ENCODE measurements at regions of chr11 and their contacts with region 1.

Region 1: GRCh38 chr11:78202733-78203167 is 14.0 kb downstream of the USP35 start:
- DNase-seq: peak; percentile 95
- ATAC-seq: peak; percentile 97
- H3K4me3 ChIP-seq: peak overlapping the region in 1 of 3 experiments; percentile 21; a peak in 2 of 6 replicates
- H3K27ac ChIP-seq: peak overlapping the region; percentile 61
- H3K4me1 ChIP-seq: peaks cover 42% of the 10 kb centered on the region
- H3K27me3 ChIP-seq: no peaks in the 10 kb centered on the region
- CTCF ChIP-seq: no peak
- EP300 ChIP-seq: peak; percentile 37 to 68; a peak in 3 of 4 replicates
- POLR2A ChIP-seq: 0 out of 4 replicates have a peak, but pooled peaks of 1 of the 2 experiments have one; percentile 18
- RAD21 ChIP-seq: peak; percentile 34; the same call in 1 of the 2 replicates

Region 2: GRCh38 chr11:78188286-78189173 is 14.2 kb before region 1 on chr11 and contains the starts of genes KCTD21 and USP35:
- CTCF ChIA-PET with region 1: no interaction called
- POLR2A ChIA-PET with region 1: interaction called, 17 read pairs
- in situ Hi-C with region 1: no loop called
- intact Hi-C with region 1: loop called (anchors 2 kb)
- DNase-seq: peak; percentile 92
- ATAC-seq: peak; percentile 93
- H3K4me3 ChIP-seq: peak within 1 kb of the TSS; percentile 78 to 96 (median 86)
- H3K27ac ChIP-seq: peak within 1 kb of the TSS; percentile 47
- H3K4me1 ChIP-seq: peaks cover 78% of the 10 kb centered on the region
- H3K27me3 ChIP-seq: no peaks in the 10 kb centered on the region; a peak in 1 of 5 replicates
- CTCF ChIP-seq: peak; percentile 9; the same call in 1 of the 2 replicates
- EP300 ChIP-seq: peak in 1 of 2 experiments; percentile 19; a peak in 2 of 4 replicates
- POLR2A ChIP-seq: peak in 1 of 2 experiments; percentile 85; a peak in 2 of 4 replicates
- RAD21 ChIP-seq: 0 out of 2 replicates have a peak, but pooled peaks have one; percentile 13
- total RNA-seq, gene KCTD21: 3.1 and 3.9 TPM in 2 replicates
- total RNA-seq, gene USP35: 1.8 and 4.6 TPM in 2 replicates

Region 3: GRCh38 chr11:78325274-78325781 is 122.6 kb after region 1 on chr11:
- CTCF ChIA-PET with region 1: no interaction called
- POLR2A ChIA-PET with region 1: no interaction called
- in situ Hi-C with region 1: no loop called
- intact Hi-C with region 1: no loop called
- DNase-seq: no peak
- ATAC-seq: no peak
- H3K4me3 ChIP-seq: no peak overlapping the region
- H3K27ac ChIP-seq: no peak overlapping the region
- H3K4me1 ChIP-seq: peaks cover 13% of the 10 kb centered on the region
- H3K27me3 ChIP-seq: no peaks in the 10 kb centered on the region
- CTCF ChIP-seq: no peak
- EP300 ChIP-seq: no peak
- POLR2A ChIP-seq: no peak
- RAD21 ChIP-seq: no peak

Region 4: DNA sequence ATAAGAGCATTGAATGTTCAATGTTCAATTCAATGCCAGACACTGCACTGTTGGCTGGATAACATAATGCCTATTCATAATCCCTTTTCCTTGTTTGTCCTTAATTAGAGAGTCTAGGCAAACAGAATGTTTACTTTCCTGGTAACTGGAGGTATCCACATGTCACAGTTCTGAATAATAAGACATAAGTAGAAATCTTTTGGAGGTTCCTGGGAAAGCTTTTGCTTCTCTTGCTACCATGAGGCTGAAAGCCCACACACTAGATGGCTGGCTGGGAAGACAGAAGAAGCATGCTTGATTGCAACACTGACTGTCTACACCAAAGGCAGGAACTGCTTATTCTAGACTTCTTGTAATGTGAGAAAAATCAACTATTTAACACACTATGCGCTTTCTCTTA is 135.4 kb after region 1 on chr11:
- CTCF ChIA-PET with region 1: no interaction called
- POLR2A ChIA-PET with region 1: no interaction called
- in situ Hi-C with region 1: no loop called
- intact Hi-C with region 1: no loop called
- DNase-seq: no peak
- ATAC-seq: peak; percentile 35; the same call in 1 of the 3 replicates
- H3K4me3 ChIP-seq: no peak overlapping the region
- H3K27ac ChIP-seq: no peak overlapping the region
- H3K4me1 ChIP-seq: peaks cover 16% of the 10 kb centered on the region
- H3K27me3 ChIP-seq: no peaks in the 10 kb centered on the region; a peak in 1 of 5 replicates
- CTCF ChIP-seq: no peak
- EP300 ChIP-seq: no peak
- POLR2A ChIP-seq: no peak
- RAD21 ChIP-seq: no peak

Region 5: GRCh38 chr11:78379039-78379670 is 176.4 kb after region 1 on chr11:
- CTCF ChIA-PET with region 1: no interaction called
- POLR2A ChIA-PET with region 1: no interaction called
- in situ Hi-C with region 1: no loop called
- intact Hi-C with region 1: no loop called
- DNase-seq: no peak
- ATAC-seq: no peak
- H3K4me3 ChIP-seq: no peak overlapping the region
- H3K27ac ChIP-seq: no peak overlapping the region
- H3K4me1 ChIP-seq: peaks cover 14% of the 10 kb centered on the region
- H3K27me3 ChIP-seq: no peaks in the 10 kb centered on the region
- CTCF ChIP-seq: no peak
- EP300 ChIP-seq: no peak
- POLR2A ChIP-seq: no peak
- RAD21 ChIP-seq: no peak

Measured in HepG2 (cell line).